ENCODE measurements at regions of chr11 and their contacts with region 1.

Region 1: DNA sequence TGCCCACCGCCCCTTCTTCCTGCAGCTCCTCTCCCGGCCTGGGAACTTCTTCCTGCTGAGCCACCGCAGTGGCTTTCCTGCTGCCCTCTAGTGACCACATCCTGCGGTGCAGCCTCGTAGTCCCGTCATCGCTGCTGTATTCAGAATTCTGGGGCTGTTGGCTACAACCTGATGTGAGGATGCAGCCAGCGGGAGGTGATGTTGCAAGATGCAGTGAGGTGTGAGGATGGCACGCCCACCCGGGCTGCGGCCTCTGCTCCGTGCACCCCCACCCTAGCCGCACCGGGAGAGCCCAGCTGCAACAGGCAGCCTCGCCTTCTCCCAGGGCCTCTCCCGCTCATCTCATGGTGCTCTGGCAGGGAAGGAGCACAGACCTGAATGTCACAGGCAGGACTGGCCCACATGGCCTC is 10.1 kb downstream of the CHST1 start:
- DNase-seq: peak in 7 of 9 donors; percentile 21 to 66 (median 37)
- ATAC-seq: peak; percentile 73
- H3K4me3 ChIP-seq: no peak overlapping the region
- H3K4me3 Mint-ChIP-seq: peak overlapping the region in 1 of 10 donors; percentile 74
- H3K27ac ChIP-seq: no peak overlapping the region
- H3K27ac Mint-ChIP-seq: peak overlapping the region in 1 of 9 donors; percentile 57
- H3K4me1 ChIP-seq: peaks cover 0 to 6% of the 10 kb centered on the region in 2 donors
- H3K4me1 Mint-ChIP-seq: peaks cover 0 to 13% (median 7%) of the 10 kb centered on the region in 7 donors
- H3K27me3 ChIP-seq: peaks cover 0 to under 1% of the 10 kb centered on the region in 2 donors
- H3K27me3 Mint-ChIP-seq: peaks cover 12 to 49% (median 24%) of the 10 kb centered on the region in 5 donors

Region 2: DNA sequence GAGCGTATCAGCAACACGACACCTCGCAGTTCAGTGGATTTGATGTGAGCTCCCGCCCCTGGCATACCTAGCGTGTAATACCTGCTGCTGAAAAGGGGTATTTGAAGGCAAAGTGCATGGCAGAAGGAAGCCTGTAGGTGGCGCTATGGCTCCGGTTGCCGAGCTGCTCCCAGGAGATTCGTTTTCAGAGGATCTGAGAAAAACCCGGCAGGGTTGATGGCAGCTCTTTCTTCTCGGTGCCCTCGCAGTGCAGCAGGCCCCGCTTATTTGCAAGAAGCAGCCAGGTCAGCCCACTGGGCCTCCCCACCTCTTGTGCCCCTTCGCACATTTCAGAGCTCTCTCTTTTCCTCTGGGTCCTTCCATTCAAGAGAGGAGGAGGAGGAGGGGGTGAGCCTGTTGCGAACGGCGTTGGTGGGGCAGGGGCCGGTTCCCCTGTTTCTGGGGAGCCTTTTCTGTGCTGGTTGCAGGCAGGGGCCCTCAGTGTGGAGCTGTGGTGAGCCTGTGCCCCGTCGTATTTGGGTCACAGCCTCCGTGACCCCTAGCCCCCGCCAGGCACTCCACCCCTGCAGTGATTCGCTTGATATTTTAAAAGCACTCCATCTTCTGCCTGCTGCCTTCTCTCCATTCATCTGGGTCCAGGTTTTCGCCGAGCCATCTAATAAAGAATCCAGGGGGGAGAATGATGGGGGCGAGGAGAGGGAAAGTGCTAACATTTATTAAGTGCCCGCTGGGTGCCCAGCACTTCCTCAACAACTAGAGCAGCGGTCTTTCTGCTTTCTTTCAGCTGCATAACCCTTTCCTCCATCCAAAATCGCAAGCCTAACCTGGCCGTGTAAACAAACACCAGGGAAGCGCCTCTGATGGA is 283.9 kb before region 1 on chr11:
- CTCF ChIA-PET with region 1: interaction called, 3 read pairs
- POLR2A ChIA-PET with region 1: no interaction called
- intact Hi-C with region 1: loop called in 1 of 2 experiments (anchors 1 kb)
- DNase-seq: peak; percentile 18 to 58 (median 39)
- ATAC-seq: peak; percentile 74
- H3K4me3 ChIP-seq: no peak overlapping the region
- H3K4me3 Mint-ChIP-seq: peak overlapping the region in 7 of 10 donors; percentile 24 to 62 (median 44)
- H3K27ac ChIP-seq: no peak overlapping the region
- H3K27ac Mint-ChIP-seq: peak overlapping the region in 3 of 9 donors; percentile 3 to 74 (median 38)
- H3K4me1 ChIP-seq: peaks cover 6 to 15% of the 10 kb centered on the region in 2 donors
- H3K4me1 Mint-ChIP-seq: peaks cover 8 to 27% (median 17%) of the 10 kb centered on the region in 7 donors
- H3K27me3 ChIP-seq: peaks cover 0 to 6% of the 10 kb centered on the region in 2 donors
- H3K27me3 Mint-ChIP-seq: peaks cover 16 to 33% (median 21%) of the 10 kb centered on the region in 5 donors

Region 3: GRCh38 chr11:45635907-45636306 is 19.4 kb before region 1 on chr11:
- CTCF ChIA-PET with region 1: no interaction called
- POLR2A ChIA-PET with region 1: no interaction called
- intact Hi-C with region 1: no loop called
- DNase-seq: no peak
- ATAC-seq: no peak
- H3K4me3 ChIP-seq: no peak overlapping the region
- H3K4me3 Mint-ChIP-seq: no peak overlapping the region
- H3K27ac ChIP-seq: no peak overlapping the region
- H3K27ac Mint-ChIP-seq: no peak overlapping the region
- H3K4me1 ChIP-seq: no peaks in the 10 kb centered on the region
- H3K4me1 Mint-ChIP-seq: no peaks in the 10 kb centered on the region
- H3K27me3 ChIP-seq: no peaks in the 10 kb centered on the region
- H3K27me3 Mint-ChIP-seq: peaks cover 33 to 73% (median 51%) of the 10 kb centered on the region in 5 donors